ENCODE measurements at regions of chr19 and their contacts with region 1.

Region 1: GRCh38 chr19:35495107-35496064 is 5.1 kb upstream of the KRTDAP start:
- H3K4me3 ChIP-seq: no peak overlapping the region
- H3K27ac ChIP-seq: no peak overlapping the region
- H3K4me1 ChIP-seq: no peaks in the 10 kb centered on the region
- CTCF ChIP-seq: peak; percentile 99

Region 2: GRCh38 chr19:35330475-35330874 is 164.9 kb before region 1 on chr19:
- CTCF ChIA-PET with region 1: interaction called, 16 read pairs
- POLR2A ChIA-PET with region 1: no interaction called
- H3K4me3 ChIP-seq: no peak overlapping the region
- H3K27ac ChIP-seq: no peak overlapping the region
- H3K4me1 ChIP-seq: no peaks in the 10 kb centered on the region
- CTCF ChIP-seq: no peak

Region 3: GRCh38 chr19:35347171-35347929 is 148.0 kb before region 1 on chr19 and contains the start of gene FFAR1:
- CTCF ChIA-PET with region 1: interaction called, 237 read pairs
- POLR2A ChIA-PET with region 1: interaction called, 13 read pairs
- H3K4me3 ChIP-seq: no peak within 1 kb of the TSS
- H3K27ac ChIP-seq: no peak within 1 kb of the TSS
- H3K4me1 ChIP-seq: no peaks in the 10 kb centered on the region
- CTCF ChIP-seq: no peak

Region 4: GRCh38 chr19:35417713-35418534 is 77.5 kb before region 1 on chr19:
- CTCF ChIA-PET with region 1: interaction called, 10 read pairs
- POLR2A ChIA-PET with region 1: no interaction called
- H3K4me3 ChIP-seq: no peak overlapping the region
- H3K27ac ChIP-seq: no peak overlapping the region
- H3K4me1 ChIP-seq: no peaks in the 10 kb centered on the region
- CTCF ChIP-seq: no peak

Region 5: GRCh38 chr19:35476149-35476548 is 19.2 kb before region 1 on chr19:
- CTCF ChIA-PET with region 1: interaction called, 22 read pairs
- POLR2A ChIA-PET with region 1: no interaction called
- H3K4me3 ChIP-seq: no peak overlapping the region
- H3K27ac ChIP-seq: no peak overlapping the region
- H3K4me1 ChIP-seq: peaks cover 13% of the 10 kb centered on the region
- CTCF ChIP-seq: peak; percentile 76